ENCODE measurements at regions of chr4 and their contacts with region 1.

Region 1: DNA sequence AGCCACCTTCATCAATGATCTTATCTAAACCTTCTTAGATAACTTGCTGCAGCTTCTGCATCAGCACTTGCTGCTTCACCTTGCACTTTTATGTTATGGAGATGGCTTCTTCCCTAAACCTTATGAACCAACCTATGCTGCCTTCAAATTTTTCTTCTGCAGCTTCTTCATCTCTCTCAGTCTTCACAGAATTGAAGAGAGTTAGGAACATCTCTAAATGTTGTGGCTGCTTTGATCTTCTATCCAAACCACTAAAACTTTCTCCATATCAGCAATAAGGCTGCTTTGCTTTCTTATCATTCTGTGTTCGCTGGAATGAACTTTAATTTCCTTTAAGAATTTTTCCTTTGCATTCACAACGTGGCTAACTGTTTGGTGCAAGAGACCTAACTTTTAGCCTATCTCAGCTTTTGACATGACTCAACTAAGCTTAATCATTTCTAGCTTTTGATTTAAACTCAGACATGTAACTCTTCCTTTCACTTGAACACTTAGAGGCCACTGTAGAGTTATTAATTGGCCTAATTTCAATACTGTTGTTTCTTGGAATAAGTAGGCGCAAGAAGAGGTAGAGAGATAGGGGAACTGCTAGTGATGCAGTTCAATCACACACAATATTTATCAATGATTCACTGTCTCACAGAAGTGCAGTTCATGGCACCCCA is 36.1 kb upstream of the CORIN start:
- DNase-seq: no peak
- H3K4me3 Mint-ChIP-seq: no peak overlapping the region
- H3K27ac Mint-ChIP-seq: peak overlapping the region; percentile 66
- H3K4me1 Mint-ChIP-seq: peaks cover 21% of the 10 kb centered on the region
- H3K27me3 Mint-ChIP-seq: no peaks in the 10 kb centered on the region

Region 2: GRCh38 chr4:47774079-47774478 is 99.9 kb before region 1 on chr4:
- intact Hi-C with region 1: no loop called
- DNase-seq: no peak
- H3K4me3 Mint-ChIP-seq: no peak overlapping the region
- H3K27ac Mint-ChIP-seq: no peak overlapping the region
- H3K4me1 Mint-ChIP-seq: no peaks in the 10 kb centered on the region
- H3K27me3 Mint-ChIP-seq: no peaks in the 10 kb centered on the region

Region 3: GRCh38 chr4:47831026-47831679 is 42.9 kb before region 1 on chr4:
- intact Hi-C with region 1: no loop called
- DNase-seq: no peak
- H3K4me3 Mint-ChIP-seq: no peak overlapping the region
- H3K27ac Mint-ChIP-seq: no peak overlapping the region
- H3K4me1 Mint-ChIP-seq: peaks cover 19% of the 10 kb centered on the region
- H3K27me3 Mint-ChIP-seq: peaks cover 32% of the 10 kb centered on the region

Region 4: GRCh38 chr4:47914220-47914925 is 40.4 kb after region 1 on chr4 and contains the start of gene NFXL1:
- intact Hi-C with region 1: loop called (anchors 1 kb)
- DNase-seq: peak; percentile 93
- H3K4me3 Mint-ChIP-seq: peak within 1 kb of the TSS; percentile 90
- H3K27ac Mint-ChIP-seq: peak within 1 kb of the TSS; percentile 83
- H3K4me1 Mint-ChIP-seq: peaks cover 22% of the 10 kb centered on the region
- H3K27me3 Mint-ChIP-seq: no peaks in the 10 kb centered on the region
- total RNA-seq, gene NFXL1: 11.9 and 13.3 TPM in 2 replicates

Region 5: GRCh38 chr4:48340965-48341775 is 467.2 kb after region 1 on chr4 and contains the start of gene SLAIN2:
- intact Hi-C with region 1: no loop called
- DNase-seq: peak; percentile 98
- H3K4me3 Mint-ChIP-seq: peak within 1 kb of the TSS; percentile 98
- H3K27ac Mint-ChIP-seq: peak within 1 kb of the TSS; percentile 97
- H3K4me1 Mint-ChIP-seq: peaks cover 61% of the 10 kb centered on the region
- H3K27me3 Mint-ChIP-seq: no peaks in the 10 kb centered on the region
- total RNA-seq, gene SLAIN2: 60.4 and 67.1 TPM in 2 replicates

Measured in activated T-helper 2 cell treated with anti-CD3 and anti-CD28 coated beads, Interferon-gamma antibody, Interleukin-2, Interleukin-4, amounts not matched to agents 10 μg/mL and 5 μg/mL and 100 μg/mL, durations not matched to agents 14 hours and 24 hours and 36 hours (primary cell).